Heart left ventricle (tissue), 16 donors: ENCODE measurements at regions of chr1 and their contacts with region 1.

Region 1: GRCh38 chr1:202105539-202106276 is 17.0 kb upstream of the GPR37L1 start:
- DNase-seq: peak in 1 of 5 donors; percentile 55
- ATAC-seq: peak in 1 of 4 donors; percentile 28
- H3K4me3 ChIP-seq: no peak overlapping the region
- H3K27ac ChIP-seq: peak overlapping the region in 3 of 12 donors; percentile 90 to 97 (median 91)
- H3K4me1 ChIP-seq: peaks cover 0 to 27% (median 11%) of the 10 kb centered on the region in 12 donors
- H3K27me3 ChIP-seq: no peaks in the 10 kb centered on the region
- CTCF ChIP-seq: no peak
- POLR2A ChIP-seq: no peak

Region 2: DNA sequence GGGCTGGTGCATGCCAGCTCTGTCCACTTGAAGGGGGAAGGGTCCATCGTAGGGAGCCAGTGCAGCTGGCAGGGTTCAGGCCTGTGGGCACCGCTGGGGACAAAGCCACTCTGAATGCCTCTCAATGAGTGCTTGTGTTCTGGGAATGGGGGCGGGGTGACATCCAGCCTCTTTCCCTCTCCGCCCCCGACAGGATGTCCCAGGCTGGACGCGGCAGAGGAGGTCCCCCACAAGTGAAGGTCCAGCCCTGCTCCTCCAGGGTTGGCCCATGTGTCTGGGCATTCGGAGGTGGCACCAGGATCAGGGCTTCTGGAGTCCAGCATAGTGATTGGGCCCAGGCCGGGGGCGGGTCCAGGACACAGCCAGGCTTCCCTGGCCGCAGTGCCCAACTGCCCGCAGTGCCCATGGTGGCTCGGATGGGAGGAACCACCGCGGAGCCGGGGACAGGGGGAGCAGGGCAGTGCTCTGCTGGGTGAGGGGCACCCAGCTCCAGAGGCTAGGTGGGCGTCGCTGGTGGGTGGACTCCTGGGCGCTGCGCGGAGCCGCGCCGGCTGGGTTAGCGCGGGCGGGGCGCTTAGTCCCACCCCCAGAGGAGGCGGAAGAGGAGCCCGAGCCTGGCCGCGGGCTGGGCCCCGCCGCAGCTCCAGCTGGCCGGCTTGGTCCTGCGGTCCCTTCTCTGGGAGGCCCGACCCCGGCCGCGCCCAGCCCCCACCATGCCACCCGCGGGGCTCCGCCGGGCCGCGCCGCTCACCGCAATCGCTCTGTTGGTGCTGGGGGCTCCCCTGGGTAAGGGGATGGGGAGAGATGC is 217.2 kb before region 1 on chr1 and contains the start of gene SHISA4:
- intact Hi-C with region 1: loop called in 2 of 10 experiments (anchors 10 kb)
- DNase-seq: peak; percentile 80 to 94 (median 89)
- ATAC-seq: peak; percentile 74 to 88 (median 84)
- H3K4me3 ChIP-seq: peak within 1 kb of the TSS; percentile 62 to 93 (median 72)
- H3K27ac ChIP-seq: peak within 1 kb of the TSS; percentile 42 to 95 (median 78)
- H3K4me1 ChIP-seq: peaks cover 0 to 84% (median 35%) of the 10 kb centered on the region in 12 donors
- H3K27me3 ChIP-seq: peaks cover 0 to 14% (median 0%) of the 10 kb centered on the region in 9 donors
- CTCF ChIP-seq: no peak
- POLR2A ChIP-seq: peak; percentile 25 to 91
- total RNA-seq, gene SHISA4: 66.5 to 262 (median 133) TPM

Region 3: GRCh38 chr1:202056644-202057461 is 48.9 kb before region 1 on chr1:
- intact Hi-C with region 1: loop called in 1 of 10 experiments (anchors 5 kb)
- DNase-seq: peak; percentile 64 to 86 (median 80)
- ATAC-seq: peak; percentile 95 to 98 (median 97)
- H3K4me3 ChIP-seq: no peak overlapping the region
- H3K27ac ChIP-seq: peak overlapping the region in 5 of 12 donors; percentile 18 to 55 (median 39)
- H3K4me1 ChIP-seq: peaks cover 0 to 5% (median 0%) of the 10 kb centered on the region in 12 donors
- H3K27me3 ChIP-seq: no peaks in the 10 kb centered on the region
- CTCF ChIP-seq: no peak
- POLR2A ChIP-seq: no peak

Region 4: GRCh38 chr1:202221911-202222909 is 116.5 kb after region 1 on chr1:
- intact Hi-C with region 1: no loop called
- DNase-seq: no peak
- ATAC-seq: peak in 2 of 4 donors; percentile 29 to 41
- H3K4me3 ChIP-seq: no peak overlapping the region
- H3K27ac ChIP-seq: no peak overlapping the region
- H3K4me1 ChIP-seq: peaks cover 0 to 24% (median 0%) of the 10 kb centered on the region in 12 donors
- H3K27me3 ChIP-seq: peaks cover 0 to 14% (median 3%) of the 10 kb centered on the region in 9 donors
- CTCF ChIP-seq: no peak
- POLR2A ChIP-seq: no peak

Region 5: DNA sequence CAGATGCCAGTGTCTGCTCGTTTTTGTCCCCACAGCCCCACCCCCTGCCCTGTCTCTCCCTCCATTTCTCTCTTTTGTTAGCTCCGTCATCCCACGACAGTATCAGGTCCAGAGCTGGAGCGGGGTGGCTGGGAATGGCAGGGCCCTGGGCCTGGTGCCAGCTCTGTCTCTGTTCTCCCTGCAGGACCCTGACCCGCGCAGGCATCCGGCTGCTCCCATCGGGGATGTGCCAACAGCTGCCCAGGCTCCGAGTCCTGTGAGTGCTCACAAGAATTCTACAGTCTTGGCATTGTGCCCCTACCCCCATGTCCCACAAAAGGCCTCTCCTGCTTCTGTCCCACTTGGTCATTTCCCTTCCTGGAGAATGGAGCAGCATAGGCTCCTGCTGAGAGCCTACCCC is 198.7 kb after region 1 on chr1:
- intact Hi-C with region 1: no loop called
- DNase-seq: peak; percentile 43 to 71 (median 61)
- ATAC-seq: peak; percentile 52 to 77 (median 61)
- H3K4me3 ChIP-seq: no peak overlapping the region
- H3K27ac ChIP-seq: no peak overlapping the region
- H3K4me1 ChIP-seq: peaks cover 0 to 15% (median 0%) of the 10 kb centered on the region in 12 donors
- H3K27me3 ChIP-seq: no peaks in the 10 kb centered on the region
- CTCF ChIP-seq: no peak
- POLR2A ChIP-seq: no peak